H1 (cell line): ENCODE measurements at regions of chr20 and their contacts with region 1.

Region 1: DNA sequence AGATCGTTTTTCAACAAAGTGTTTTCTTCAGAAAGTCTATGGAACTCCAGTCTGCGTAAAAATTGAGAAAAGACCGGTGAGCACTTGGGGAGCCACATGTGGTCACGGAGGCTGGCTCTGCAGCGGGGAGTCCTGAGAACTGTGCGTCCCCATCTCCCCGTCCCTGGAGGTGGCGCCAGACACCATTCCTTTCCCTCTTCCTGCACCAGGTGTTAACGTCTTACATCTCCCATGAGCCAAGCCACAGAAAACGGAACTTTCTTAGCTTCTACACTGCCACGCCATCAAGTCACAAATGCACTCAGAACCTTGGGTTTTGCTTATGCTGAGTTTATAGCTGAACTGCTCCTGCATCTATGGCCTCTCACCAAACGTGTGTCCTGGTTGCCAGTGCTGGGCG is 62.6 kb downstream of the GINS1 start:
- DNase-seq: peak; percentile 56 to 73
- H3K4me3 ChIP-seq: no peak overlapping the region
- H3K27ac ChIP-seq: no peak overlapping the region
- H3K4me1 ChIP-seq: no peaks in the 10 kb centered on the region; a peak in 2 of 7 replicates
- H3K27me3 ChIP-seq: no peaks in the 10 kb centered on the region
- CTCF ChIP-seq: peak; percentile 85 to 95 (median 90)
- EP300 ChIP-seq: no peak
- POLR2A ChIP-seq: no peak
- RAD21 ChIP-seq: peak; percentile 94 to 96

Region 2: DNA sequence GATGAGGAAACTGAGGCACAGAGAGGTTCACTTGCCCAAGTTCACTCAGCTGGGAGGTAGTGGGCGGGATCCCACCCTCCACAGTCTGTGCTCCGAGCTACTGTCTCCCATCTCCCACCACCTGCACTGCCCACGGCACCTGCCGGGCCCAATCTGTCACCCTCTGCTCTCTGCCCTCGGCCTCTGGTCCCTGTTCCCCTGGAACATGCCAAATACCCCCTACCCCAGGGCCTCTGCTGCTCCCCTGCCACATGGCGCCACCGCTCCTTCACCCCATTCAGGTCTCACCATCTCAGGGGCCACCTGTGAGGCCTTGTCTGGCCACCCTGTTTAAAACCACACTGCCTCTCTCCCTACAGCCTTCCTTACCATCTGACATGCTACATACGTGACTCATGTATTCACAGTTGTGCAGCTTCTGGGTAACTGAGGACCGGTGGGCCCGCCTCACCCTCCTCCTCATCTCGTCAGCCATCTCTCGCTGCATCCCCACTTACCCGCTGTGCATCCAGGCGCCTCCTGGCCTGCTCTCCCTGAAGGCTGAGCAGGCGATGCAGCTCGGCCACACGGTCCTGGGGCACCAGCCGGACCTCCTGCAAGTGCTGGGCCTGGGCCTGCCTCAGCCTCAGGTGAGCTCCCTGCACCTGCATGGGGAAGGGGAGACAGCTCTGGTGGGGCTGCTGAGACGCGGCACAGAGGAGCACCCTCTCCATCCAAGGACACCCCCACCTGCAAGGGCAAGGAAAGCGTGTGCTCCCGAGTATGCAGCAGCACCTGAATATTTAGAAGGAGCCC is 12.0 kb before region 1 on chr20:
- CTCF ChIA-PET with region 1: interaction called, 17 read pairs
- POLR2A ChIA-PET with region 1: no interaction called
- DNase-seq: no peak
- H3K4me3 ChIP-seq: no peak overlapping the region
- H3K27ac ChIP-seq: no peak overlapping the region
- H3K4me1 ChIP-seq: no peaks in the 10 kb centered on the region; a peak in 1 of 7 replicates
- H3K27me3 ChIP-seq: no peaks in the 10 kb centered on the region
- CTCF ChIP-seq: no peak
- EP300 ChIP-seq: no peak
- POLR2A ChIP-seq: no peak
- RAD21 ChIP-seq: no peak

Region 3: GRCh38 chr20:25481235-25481915 is 11.3 kb after region 1 on chr20:
- CTCF ChIA-PET with region 1: interaction called, 25 read pairs
- POLR2A ChIA-PET with region 1: interaction called, 8 read pairs
- DNase-seq: no peak
- H3K4me3 ChIP-seq: no peak overlapping the region
- H3K27ac ChIP-seq: no peak overlapping the region
- H3K4me1 ChIP-seq: 0 out of 7 replicates have a peak, but pooled peaks cover 0 to under 1% (median 0%) of the 10 kb centered on the region in 4 experiments
- H3K27me3 ChIP-seq: no peaks in the 10 kb centered on the region
- CTCF ChIP-seq: peak in 2 of 3 experiments; percentile 11 to 12; a peak in 2 of 4 replicates
- EP300 ChIP-seq: no peak
- POLR2A ChIP-seq: no peak
- RAD21 ChIP-seq: no peak

Region 4: GRCh38 chr20:25495189-25495824 is 25.3 kb after region 1 on chr20:
- CTCF ChIA-PET with region 1: interaction called, 10 read pairs
- POLR2A ChIA-PET with region 1: interaction called, 3 read pairs
- DNase-seq: no peak
- H3K4me3 ChIP-seq: no peak overlapping the region
- H3K27ac ChIP-seq: no peak overlapping the region
- H3K4me1 ChIP-seq: peaks cover 0 to 6% (median 4%) of the 10 kb centered on the region in 4 experiments; a peak in 3 of 7 replicates
- H3K27me3 ChIP-seq: no peaks in the 10 kb centered on the region
- CTCF ChIP-seq: no peak
- EP300 ChIP-seq: no peak
- POLR2A ChIP-seq: no peak
- RAD21 ChIP-seq: no peak

Region 5: DNA sequence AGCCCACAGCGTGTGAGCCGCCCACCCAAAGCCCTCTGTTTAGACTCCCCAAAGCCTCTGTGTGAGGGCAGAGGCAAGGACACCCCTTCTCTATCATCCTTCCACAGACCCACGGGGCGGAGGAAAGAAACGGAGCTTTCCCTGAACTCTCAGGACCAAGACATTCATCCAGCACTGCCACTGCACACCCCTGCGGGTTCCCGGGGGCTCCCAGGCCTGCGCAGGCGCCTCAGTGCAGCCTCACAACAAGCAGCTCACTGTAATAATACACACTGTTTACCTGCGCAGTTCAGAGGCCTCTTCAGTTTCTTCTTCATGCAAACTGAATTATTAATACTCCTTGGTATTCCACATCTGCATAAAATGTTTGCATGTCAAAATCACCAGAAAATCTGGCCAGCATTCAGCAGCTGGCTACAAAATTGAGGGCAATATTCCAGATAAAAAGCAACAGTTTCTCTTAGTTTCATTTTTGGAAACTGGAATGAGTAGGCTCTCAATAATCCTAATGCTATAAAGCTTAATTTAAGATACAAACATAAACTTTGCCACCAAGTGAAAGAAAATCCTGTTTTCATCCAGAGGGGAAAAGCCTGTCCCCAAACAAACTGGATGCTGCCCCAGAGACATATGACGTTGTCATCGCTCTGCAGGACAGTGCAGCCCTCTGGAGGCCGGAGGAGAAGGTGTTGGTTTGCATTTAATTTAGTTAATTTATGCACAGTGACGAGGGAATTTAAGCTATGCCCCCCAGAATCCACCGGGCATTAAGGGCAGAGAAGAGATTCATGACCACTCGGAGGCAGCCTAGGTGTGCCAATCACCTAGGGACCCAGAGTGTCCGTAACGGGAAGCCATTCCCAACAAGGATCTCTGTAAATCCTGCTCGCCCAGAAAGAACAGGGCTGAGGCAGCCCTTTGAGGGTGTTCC is 70.0 kb after region 1 on chr20:
- CTCF ChIA-PET with region 1: interaction called, 12 read pairs
- POLR2A ChIA-PET with region 1: no interaction called
- DNase-seq: no peak
- H3K4me3 ChIP-seq: no peak overlapping the region
- H3K27ac ChIP-seq: no peak overlapping the region
- H3K4me1 ChIP-seq: peaks cover 2 to 18% (median 6%) of the 10 kb centered on the region in 4 experiments
- H3K27me3 ChIP-seq: no peaks in the 10 kb centered on the region
- CTCF ChIP-seq: peak in 2 of 3 experiments; percentile 44 to 49; a peak in 3 of 4 replicates
- EP300 ChIP-seq: no peak
- POLR2A ChIP-seq: no peak
- RAD21 ChIP-seq: peak; percentile 47 to 54

Region 6: DNA sequence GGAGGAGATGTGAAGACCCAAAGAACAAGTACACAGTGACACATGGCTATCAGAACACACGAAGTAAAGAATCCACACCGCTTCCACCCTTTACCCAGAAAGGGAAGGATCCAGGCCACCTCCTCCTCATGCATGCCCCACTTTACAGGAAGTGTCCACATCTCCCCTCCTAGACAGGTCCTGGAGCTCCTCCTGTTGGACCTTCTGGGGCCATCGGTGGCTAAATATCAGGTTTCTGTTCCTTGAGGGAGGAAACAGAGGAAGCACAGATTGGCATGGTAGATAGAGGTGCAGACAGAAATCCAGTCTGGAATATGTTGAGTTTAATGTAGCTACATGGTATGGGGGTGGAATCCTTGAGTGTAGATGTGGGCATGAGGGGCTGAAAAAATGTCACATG is 104.4 kb after region 1 on chr20:
- CTCF ChIA-PET with region 1: interaction called, 10 read pairs
- POLR2A ChIA-PET with region 1: no interaction called
- DNase-seq: no peak
- H3K4me3 ChIP-seq: no peak overlapping the region
- H3K27ac ChIP-seq: no peak overlapping the region
- H3K4me1 ChIP-seq: peaks cover 0 to 6% (median 4%) of the 10 kb centered on the region in 4 experiments; a peak in 4 of 7 replicates
- H3K27me3 ChIP-seq: no peaks in the 10 kb centered on the region
- CTCF ChIP-seq: peak; percentile 28 to 55 (median 28); a peak in 3 of 4 replicates
- EP300 ChIP-seq: no peak
- POLR2A ChIP-seq: no peak
- RAD21 ChIP-seq: peak; percentile 59 to 66